ENCODE measurements at regions of chr5 and their contacts with region 1.

Region 1: GRCh38 chr5:157718519-157718918 is 12.7 kb upstream of the THG1L start:
- DNase-seq: peak in 2 of 3 donors; percentile 48 to 61
- ATAC-seq: peak; percentile 84 to 94
- H3K4me3 ChIP-seq: no peak overlapping the region
- H3K27ac ChIP-seq: no peak overlapping the region
- H3K4me1 ChIP-seq: peaks cover 5% of the 10 kb centered on the region
- H3K27me3 ChIP-seq: no peaks in the 10 kb centered on the region

Region 2: GRCh38 chr5:157303667-157304327 is 414.7 kb before region 1 on chr5:
- intact Hi-C with region 1: no loop called
- DNase-seq: peak; percentile 47 to 86 (median 86)
- ATAC-seq: peak; percentile 70 to 84
- H3K4me3 ChIP-seq: no peak overlapping the region
- H3K27ac ChIP-seq: no peak overlapping the region
- H3K4me1 ChIP-seq: no peaks in the 10 kb centered on the region
- H3K27me3 ChIP-seq: no peaks in the 10 kb centered on the region

Region 3: GRCh38 chr5:157335534-157336422 is 382.7 kb before region 1 on chr5:
- intact Hi-C with region 1: loop called in 2 of 4 experiments (anchors 10 kb)
- DNase-seq: peak in 1 of 3 donors; percentile 77
- ATAC-seq: peak in 1 of 2 donors; percentile 81
- H3K4me3 ChIP-seq: no peak overlapping the region
- H3K27ac ChIP-seq: peak overlapping the region; percentile 39
- H3K4me1 ChIP-seq: no peaks in the 10 kb centered on the region
- H3K27me3 ChIP-seq: no peaks in the 10 kb centered on the region

Region 4: DNA sequence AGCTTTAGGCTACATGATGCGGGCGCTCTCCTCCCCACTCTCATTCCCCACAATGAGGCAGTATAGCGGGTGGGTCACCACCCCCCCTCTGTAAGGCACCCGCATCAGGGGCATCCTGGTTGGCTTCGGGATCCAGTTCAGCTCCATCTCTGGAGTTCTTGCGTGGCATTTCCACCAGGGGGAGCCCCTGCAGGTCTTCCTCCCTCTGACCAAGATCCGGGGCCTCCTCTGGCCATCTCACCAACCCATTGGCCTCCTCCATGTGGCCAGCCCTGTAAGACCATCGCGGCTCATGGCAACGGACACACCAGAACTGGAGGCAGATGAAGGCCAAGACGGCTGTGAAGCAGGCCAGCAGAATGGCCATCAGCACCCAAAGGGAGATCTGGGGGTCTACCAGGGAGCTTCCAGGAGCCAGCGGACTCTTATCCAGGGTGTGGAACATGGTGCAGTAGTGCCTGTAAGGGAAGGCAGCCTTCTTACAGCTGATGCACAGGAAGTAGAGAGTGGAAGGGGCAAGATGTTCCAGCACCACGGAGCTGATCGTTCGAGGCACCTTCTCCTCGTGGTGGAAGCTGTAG is 375.6 kb before region 1 on chr5:
- intact Hi-C with region 1: loop called in 2 of 4 experiments (anchors 10 kb)
- DNase-seq: peak in 2 of 3 donors; percentile 27 to 67
- ATAC-seq: peak in 1 of 2 donors; percentile 31
- H3K4me3 ChIP-seq: no peak overlapping the region
- H3K27ac ChIP-seq: no peak overlapping the region
- H3K4me1 ChIP-seq: no peaks in the 10 kb centered on the region
- H3K27me3 ChIP-seq: no peaks in the 10 kb centered on the region

Region 5: DNA sequence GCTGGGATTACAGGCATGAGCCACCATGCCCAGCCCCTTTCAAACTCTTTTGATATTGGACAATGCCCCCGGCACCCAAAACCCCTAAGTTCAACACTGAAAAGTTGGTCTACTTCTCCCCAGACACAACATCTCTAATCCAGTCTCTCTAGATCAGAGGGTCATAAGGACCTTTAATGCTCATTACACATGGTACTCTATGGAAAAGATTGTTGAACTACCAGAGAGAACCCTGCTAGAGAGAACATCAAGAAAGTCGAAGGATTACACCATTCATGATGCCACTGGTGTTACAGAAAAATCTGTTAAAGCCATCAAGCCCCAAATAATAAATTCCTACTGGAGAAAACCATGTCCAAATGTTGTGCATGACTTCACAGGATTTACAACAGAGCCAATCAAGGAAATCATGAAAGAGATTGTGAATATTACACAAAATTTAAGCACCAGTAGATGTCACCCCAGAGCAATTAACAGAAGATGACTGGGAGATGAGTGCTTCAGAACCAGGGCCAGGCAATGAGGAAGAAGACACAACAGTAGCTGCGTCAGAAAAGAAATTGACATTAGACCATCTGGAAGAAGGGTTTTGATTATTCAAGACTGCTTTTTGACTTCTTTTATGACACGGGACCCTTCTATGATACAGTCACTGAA is 286.8 kb before region 1 on chr5:
- intact Hi-C with region 1: loop called (anchors 5 to 10 kb)
- DNase-seq: no peak
- ATAC-seq: peak; percentile 84 to 86
- H3K4me3 ChIP-seq: no peak overlapping the region
- H3K27ac ChIP-seq: no peak overlapping the region
- H3K4me1 ChIP-seq: no peaks in the 10 kb centered on the region
- H3K27me3 ChIP-seq: no peaks in the 10 kb centered on the region

Region 6: GRCh38 chr5:158054223-158055110 is 335.9 kb after region 1 on chr5:
- intact Hi-C with region 1: no loop called
- DNase-seq: no peak
- ATAC-seq: no peak
- H3K4me3 ChIP-seq: no peak overlapping the region
- H3K27ac ChIP-seq: no peak overlapping the region
- H3K4me1 ChIP-seq: no peaks in the 10 kb centered on the region
- H3K27me3 ChIP-seq: no peaks in the 10 kb centered on the region